ENCODE measurements at regions of chr10 and their contacts with region 1.

Region 1: GRCh38 chr10:59382831-59383295 is 20.5 kb upstream of the FAM13C start:
- DNase-seq: peak; percentile 86
- H3K4me3 ChIP-seq: no peak overlapping the region
- H3K27ac ChIP-seq: peak overlapping the region; percentile 49
- H3K27me3 ChIP-seq: no peaks in the 10 kb centered on the region
- CTCF ChIP-seq: no peak

Region 2: GRCh38 chr10:59255463-59255862 is 127.4 kb before region 1 on chr10:
- CTCF ChIA-PET with region 1: no interaction called
- POLR2A ChIA-PET with region 1: no interaction called
- DNase-seq: no peak
- H3K4me3 ChIP-seq: no peak overlapping the region
- H3K27ac ChIP-seq: no peak overlapping the region
- H3K27me3 ChIP-seq: no peaks in the 10 kb centered on the region
- CTCF ChIP-seq: no peak

Region 3: GRCh38 chr10:59337201-59337652 is 45.6 kb before region 1 on chr10:
- CTCF ChIA-PET with region 1: interaction called, 3 read pairs
- POLR2A ChIA-PET with region 1: interaction called, 21 read pairs
- DNase-seq: peak; percentile 26
- H3K4me3 ChIP-seq: no peak overlapping the region
- H3K27ac ChIP-seq: peak overlapping the region; percentile 71
- H3K27me3 ChIP-seq: no peaks in the 10 kb centered on the region
- CTCF ChIP-seq: no peak

Region 4: GRCh38 chr10:59362144-59362958 is 20.5 kb before region 1 on chr10 and contains the start of gene FAM13C:
- CTCF ChIA-PET with region 1: no interaction called
- POLR2A ChIA-PET with region 1: interaction called, 13 read pairs
- DNase-seq: no peak
- H3K4me3 ChIP-seq: peak within 1 kb of the TSS; percentile 65
- H3K27ac ChIP-seq: peak within 1 kb of the TSS; percentile 42
- H3K27me3 ChIP-seq: no peaks in the 10 kb centered on the region
- CTCF ChIP-seq: no peak
- polyA plus RNA-seq, gene FAM13C: 3.1 and 4.6 TPM in 2 replicates

Region 5: DNA sequence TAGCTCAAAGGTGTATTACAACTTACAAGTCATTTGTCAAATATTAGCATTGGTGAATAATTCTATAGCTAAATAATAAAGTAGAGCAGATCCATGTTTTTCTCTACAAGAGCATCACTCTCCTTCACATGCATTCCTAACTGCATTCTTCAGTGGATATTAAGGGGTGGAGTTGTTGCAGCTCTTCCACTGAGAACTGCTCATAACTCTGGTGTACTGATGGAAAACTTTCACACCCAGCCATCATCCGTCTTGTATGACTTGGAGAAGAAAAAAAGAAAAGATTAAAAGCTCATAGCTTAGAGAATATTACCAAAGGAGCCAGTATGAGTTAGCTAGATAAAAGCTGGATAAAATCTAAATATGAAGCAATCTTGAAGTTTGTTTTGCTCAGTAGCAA is 10.3 kb before region 1 on chr10:
- CTCF ChIA-PET with region 1: no interaction called
- POLR2A ChIA-PET with region 1: interaction called, 15 read pairs
- DNase-seq: no peak
- H3K4me3 ChIP-seq: no peak overlapping the region
- H3K27ac ChIP-seq: no peak overlapping the region
- H3K27me3 ChIP-seq: no peaks in the 10 kb centered on the region
- CTCF ChIP-seq: no peak

Region 6: DNA sequence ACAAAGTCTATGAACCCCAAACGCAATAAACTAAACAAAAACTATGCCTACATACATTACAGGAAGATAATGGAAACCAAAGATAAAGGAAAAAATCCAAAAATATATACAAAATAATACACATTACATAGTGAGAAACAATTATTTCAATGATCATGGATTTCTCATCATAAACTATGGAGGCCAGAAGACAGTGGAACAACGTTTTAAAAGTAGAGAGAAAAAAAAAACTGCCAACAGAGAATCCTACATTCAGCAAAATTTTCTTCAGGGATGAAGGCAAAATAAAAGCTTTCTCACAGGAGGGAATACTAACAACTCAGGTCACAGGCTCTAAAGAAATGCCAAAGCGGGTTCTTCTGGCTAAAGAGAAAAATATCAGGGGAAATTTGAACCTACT is 22.4 kb after region 1 on chr10:
- CTCF ChIA-PET with region 1: no interaction called
- POLR2A ChIA-PET with region 1: no interaction called
- DNase-seq: no peak
- H3K4me3 ChIP-seq: no peak overlapping the region
- H3K27ac ChIP-seq: no peak overlapping the region
- H3K27me3 ChIP-seq: no peaks in the 10 kb centered on the region
- CTCF ChIP-seq: no peak

Region 7: DNA sequence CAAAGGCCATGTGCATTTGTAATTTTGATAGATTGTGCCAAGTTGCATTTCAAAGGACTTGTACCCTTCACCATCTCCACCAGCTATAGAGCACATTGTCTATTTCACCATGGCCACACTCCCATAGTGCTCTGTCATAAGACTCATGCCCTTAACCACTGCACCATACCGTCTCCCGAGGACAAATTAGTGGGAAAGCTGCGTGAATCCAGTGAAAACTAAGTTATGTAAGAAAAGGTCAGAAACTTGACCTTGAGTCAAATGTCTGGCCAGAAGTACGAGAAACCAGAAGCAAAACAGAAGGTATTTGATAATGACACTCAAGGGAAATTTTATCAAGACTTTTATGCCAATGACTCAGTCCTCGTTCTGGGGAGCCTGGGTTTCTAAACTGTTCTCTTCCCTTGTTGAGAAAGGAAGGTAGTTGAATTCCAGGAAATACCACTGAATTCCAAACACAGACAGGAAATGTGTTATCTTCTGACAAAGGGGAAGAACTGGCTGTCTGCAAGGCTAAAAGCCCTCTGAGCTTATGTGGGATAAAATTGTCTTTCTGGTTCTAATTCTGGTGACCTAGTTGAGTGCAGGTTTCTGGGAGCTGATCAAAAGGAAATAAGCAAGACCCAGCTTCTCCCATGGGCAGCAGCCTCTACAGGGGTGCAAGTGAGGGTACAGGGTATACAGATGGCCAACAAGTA is 1445.1 kb after region 1 on chr10:
- CTCF ChIA-PET with region 1: no interaction called
- POLR2A ChIA-PET with region 1: no interaction called
- DNase-seq: no peak
- H3K4me3 ChIP-seq: no peak overlapping the region
- H3K27ac ChIP-seq: no peak overlapping the region
- H3K27me3 ChIP-seq: no peaks in the 10 kb centered on the region
- CTCF ChIP-seq: no peak